ENCODE measurements at regions of chr3 and their contacts with region 1.

Region 1: GRCh38 chr3:125585595-125586223 is 9.6 kb downstream of the OSBPL11 start:
- DNase-seq: peak; percentile 67
- ATAC-seq: peak; percentile 66
- H3K4me3 Mint-ChIP-seq: no peak overlapping the region
- H3K27ac Mint-ChIP-seq: no peak overlapping the region
- H3K4me1 Mint-ChIP-seq: peaks cover 28% of the 10 kb centered on the region
- H3K27me3 Mint-ChIP-seq: no peaks in the 10 kb centered on the region
- CTCF ChIP-seq: peak; percentile 95

Region 2: GRCh38 chr3:125470671-125471070 is 115.0 kb before region 1 on chr3:
- CTCF ChIA-PET with region 1: interaction called, 10 read pairs
- POLR2A ChIA-PET with region 1: no interaction called
- intact Hi-C with region 1: no loop called
- DNase-seq: no peak
- ATAC-seq: no peak
- H3K4me3 Mint-ChIP-seq: no peak overlapping the region
- H3K27ac Mint-ChIP-seq: no peak overlapping the region
- H3K4me1 Mint-ChIP-seq: no peaks in the 10 kb centered on the region
- H3K27me3 Mint-ChIP-seq: no peaks in the 10 kb centered on the region
- CTCF ChIP-seq: no peak

Region 3: GRCh38 chr3:125519678-125520589 is 65.8 kb before region 1 on chr3 and contains the start of gene SNX4:
- CTCF ChIA-PET with region 1: interaction called, 23 read pairs
- POLR2A ChIA-PET with region 1: interaction called, 3 read pairs
- intact Hi-C with region 1: no loop called
- DNase-seq: peak; percentile 93
- ATAC-seq: peak; percentile 98
- H3K4me3 Mint-ChIP-seq: peak within 1 kb of the TSS; percentile 83
- H3K27ac Mint-ChIP-seq: peak within 1 kb of the TSS; percentile 84
- H3K4me1 Mint-ChIP-seq: peaks cover 39% of the 10 kb centered on the region
- H3K27me3 Mint-ChIP-seq: no peaks in the 10 kb centered on the region
- CTCF ChIP-seq: no peak
- total RNA-seq, gene SNX4: 28.3 to 31.3 TPM

Measured in activated CD8-positive, alpha-beta T cell treated with anti-CD3 and anti-CD28 coated beads for 36 hours (primary cell).